ENCODE measurements at regions of chr3 and their contacts with region 1.

Region 1: DNA sequence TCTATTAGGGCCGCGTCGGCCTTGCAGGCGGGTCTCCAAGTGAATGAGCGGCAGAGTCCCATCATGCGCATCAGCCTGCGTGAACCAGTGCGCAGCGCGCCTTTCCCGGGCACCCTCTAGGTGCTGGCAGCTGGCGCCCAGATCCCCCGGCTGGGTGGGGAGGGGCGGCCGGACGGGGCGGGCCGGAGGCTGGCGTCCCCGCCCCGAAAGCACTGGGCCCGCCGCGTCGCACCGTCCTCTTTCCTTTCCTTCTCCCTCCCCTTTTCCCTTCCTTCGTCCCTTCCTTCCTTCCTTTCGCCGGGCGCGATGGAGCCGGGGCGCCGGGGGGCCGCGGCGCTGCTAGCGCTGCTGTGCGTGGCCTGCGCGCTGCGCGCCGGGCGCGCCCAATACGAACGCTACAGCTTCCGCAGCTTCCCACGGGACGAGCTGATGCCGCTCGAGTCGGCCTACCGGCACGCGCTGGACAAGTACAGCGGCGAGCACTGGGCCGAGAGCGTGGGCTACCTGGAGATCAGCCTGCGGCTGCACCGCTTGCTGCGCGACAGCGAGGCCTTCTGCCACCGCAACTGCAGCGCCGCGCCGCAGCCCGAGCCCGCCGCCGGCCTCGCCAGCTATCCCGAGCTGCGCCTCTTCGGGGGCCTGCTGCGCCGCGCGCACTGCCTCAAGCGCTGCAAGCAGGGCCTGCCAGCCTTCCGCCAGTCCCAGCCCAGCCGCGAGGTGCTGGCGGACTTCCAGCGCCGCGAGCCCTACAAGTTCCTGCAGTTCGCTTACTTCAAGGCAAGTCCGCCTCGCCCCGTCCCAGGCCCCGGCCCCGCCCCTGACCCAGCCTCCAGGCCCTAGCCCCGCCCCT is at the start of gene CRTAP:
- DNase-seq: peak; percentile 89 to 99
- H3K4me3 ChIP-seq: peak within 1 kb of the TSS; percentile 85 to 92
- H3K27ac ChIP-seq: peak within 1 kb of the TSS; percentile 95 to 96
- H3K4me1 ChIP-seq: peaks cover 6 to 24% of the 10 kb centered on the region in 2 donors
- H3K27me3 ChIP-seq: no peaks in the 10 kb centered on the region
- CTCF ChIP-seq: no peak
- total RNA-seq, gene CRTAP: 300 TPM

Region 2: GRCh38 chr3:33096093-33096868 is 17.7 kb before region 1 on chr3:
- intact Hi-C with region 1: loop called (anchors 1 kb)
- DNase-seq: peak in 1 of 2 donors; percentile 78
- H3K4me3 ChIP-seq: peak overlapping the region; percentile 68 to 91
- H3K27ac ChIP-seq: peak overlapping the region; percentile 93 to 96
- H3K4me1 ChIP-seq: peaks cover 0 to 9% of the 10 kb centered on the region in 2 donors
- H3K27me3 ChIP-seq: no peaks in the 10 kb centered on the region
- CTCF ChIP-seq: no peak

Region 3: GRCh38 chr3:33186524-33187367 is 72.7 kb after region 1 on chr3:
- intact Hi-C with region 1: no loop called
- DNase-seq: no peak
- H3K4me3 ChIP-seq: no peak overlapping the region
- H3K27ac ChIP-seq: peak overlapping the region; percentile 16 to 35
- H3K4me1 ChIP-seq: peaks cover 0 to 13% of the 10 kb centered on the region in 2 donors
- H3K27me3 ChIP-seq: no peaks in the 10 kb centered on the region
- CTCF ChIP-seq: peak in 1 of 3 experiments; percentile 16